ENCODE measurements at regions of chr1 and their contacts with region 1.

Region 1: GRCh38 chr1:19582302-19582701 is 61.8 kb upstream of the NBL1 start:
- DNase-seq: peak; percentile 91
- ATAC-seq: peak; percentile 99
- H3K4me3 Mint-ChIP-seq: no peak overlapping the region
- H3K27ac Mint-ChIP-seq: no peak overlapping the region
- H3K4me1 Mint-ChIP-seq: no peaks in the 10 kb centered on the region
- H3K27me3 Mint-ChIP-seq: no peaks in the 10 kb centered on the region; the same call in 1 of the 2 replicates
- CTCF ChIP-seq: peak; percentile 78

Region 2: GRCh38 chr1:19338323-19338762 is 244.0 kb before region 1 on chr1:
- CTCF ChIA-PET with region 1: interaction called, 18 read pairs
- POLR2A ChIA-PET with region 1: interaction called, 3 read pairs
- DNase-seq: peak; percentile 90
- ATAC-seq: peak; percentile 75
- H3K4me3 Mint-ChIP-seq: peak overlapping the region; percentile 56
- H3K27ac Mint-ChIP-seq: peak overlapping the region; percentile 98
- H3K4me1 Mint-ChIP-seq: peaks cover 34% of the 10 kb centered on the region
- H3K27me3 Mint-ChIP-seq: no peaks in the 10 kb centered on the region
- CTCF ChIP-seq: peak; percentile 33; the same call in 1 of the 2 replicates

Region 3: DNA sequence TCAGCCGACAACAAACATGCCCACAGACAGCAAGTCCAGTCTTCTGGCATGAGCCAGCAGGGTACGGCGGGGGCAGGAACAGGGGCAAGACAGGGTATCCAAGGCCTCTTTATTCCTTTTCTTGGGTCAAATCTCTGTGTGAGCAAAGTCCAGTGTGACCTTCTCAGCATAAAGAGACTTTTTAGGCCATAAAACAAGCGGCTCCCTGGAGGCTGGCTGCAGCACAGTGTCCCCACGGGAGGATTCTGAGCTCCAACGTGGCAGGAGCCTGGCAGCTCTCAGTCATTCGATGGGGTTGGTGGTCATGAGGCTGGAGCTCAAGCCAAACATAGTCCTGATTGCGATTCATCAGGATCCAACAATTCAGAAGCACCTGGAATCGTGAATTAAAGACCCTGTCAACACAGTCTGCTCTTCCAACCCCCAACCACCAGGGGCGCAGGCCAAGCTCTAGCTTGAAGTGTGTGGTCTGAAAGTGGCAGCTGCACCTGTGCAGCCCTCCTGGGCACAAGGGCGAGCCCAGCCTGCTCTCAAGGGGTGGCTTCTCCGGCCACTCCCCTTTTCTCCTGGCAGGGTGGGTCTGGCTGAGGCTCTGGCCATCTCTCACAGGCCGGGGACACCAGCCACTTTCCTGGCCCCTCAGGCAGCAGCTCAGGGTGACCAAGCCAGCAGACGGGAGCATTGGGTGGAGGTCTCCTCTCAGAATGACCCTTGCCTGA is 208.1 kb before region 1 on chr1:
- CTCF ChIA-PET with region 1: interaction called, 20 read pairs
- POLR2A ChIA-PET with region 1: no interaction called
- DNase-seq: peak; percentile 79
- ATAC-seq: peak; percentile 90
- H3K4me3 Mint-ChIP-seq: no peak overlapping the region
- H3K27ac Mint-ChIP-seq: no peak overlapping the region
- H3K4me1 Mint-ChIP-seq: no peaks in the 10 kb centered on the region
- H3K27me3 Mint-ChIP-seq: no peaks in the 10 kb centered on the region
- CTCF ChIP-seq: peak; percentile 81

Region 4: DNA sequence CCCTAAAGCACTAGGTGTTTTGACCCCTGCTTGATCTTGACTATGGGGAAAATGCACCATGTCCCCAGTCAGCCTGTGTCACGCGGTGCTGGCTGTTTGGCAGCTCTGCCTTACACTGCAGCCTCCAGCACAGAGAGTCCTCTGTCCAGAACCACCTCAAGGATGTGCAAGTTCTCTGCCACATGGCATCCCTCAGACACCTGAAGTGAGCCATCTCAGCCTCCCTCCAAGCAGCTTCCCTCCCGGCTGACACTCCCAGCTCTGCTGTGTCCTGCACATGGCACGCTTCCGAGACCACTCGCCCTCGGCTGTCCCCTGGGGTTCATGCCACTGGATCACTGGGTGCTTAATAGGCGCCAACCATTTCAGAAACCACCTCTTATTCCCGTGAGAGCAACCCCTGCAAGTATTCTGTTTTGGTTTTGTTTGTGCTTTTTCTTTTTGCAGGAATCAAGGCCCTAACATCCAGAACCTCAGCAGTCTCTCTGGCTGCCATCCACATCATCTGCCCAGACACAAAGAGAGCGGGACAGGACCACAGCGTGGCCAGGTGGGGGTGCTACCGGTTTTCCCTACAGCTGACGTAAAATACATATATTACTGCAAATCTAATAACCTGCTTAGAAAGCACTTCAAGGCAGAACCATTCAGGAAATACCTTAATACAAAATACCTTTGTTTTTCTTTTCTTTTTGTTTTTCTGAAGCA is 142.7 kb before region 1 on chr1:
- CTCF ChIA-PET with region 1: interaction called, 60 read pairs
- POLR2A ChIA-PET with region 1: no interaction called
- DNase-seq: peak; percentile 54
- ATAC-seq: peak; percentile 74
- H3K4me3 Mint-ChIP-seq: no peak overlapping the region
- H3K27ac Mint-ChIP-seq: peak overlapping the region; percentile 70
- H3K4me1 Mint-ChIP-seq: peaks cover 39% of the 10 kb centered on the region
- H3K27me3 Mint-ChIP-seq: no peaks in the 10 kb centered on the region
- CTCF ChIP-seq: no peak

Region 5: DNA sequence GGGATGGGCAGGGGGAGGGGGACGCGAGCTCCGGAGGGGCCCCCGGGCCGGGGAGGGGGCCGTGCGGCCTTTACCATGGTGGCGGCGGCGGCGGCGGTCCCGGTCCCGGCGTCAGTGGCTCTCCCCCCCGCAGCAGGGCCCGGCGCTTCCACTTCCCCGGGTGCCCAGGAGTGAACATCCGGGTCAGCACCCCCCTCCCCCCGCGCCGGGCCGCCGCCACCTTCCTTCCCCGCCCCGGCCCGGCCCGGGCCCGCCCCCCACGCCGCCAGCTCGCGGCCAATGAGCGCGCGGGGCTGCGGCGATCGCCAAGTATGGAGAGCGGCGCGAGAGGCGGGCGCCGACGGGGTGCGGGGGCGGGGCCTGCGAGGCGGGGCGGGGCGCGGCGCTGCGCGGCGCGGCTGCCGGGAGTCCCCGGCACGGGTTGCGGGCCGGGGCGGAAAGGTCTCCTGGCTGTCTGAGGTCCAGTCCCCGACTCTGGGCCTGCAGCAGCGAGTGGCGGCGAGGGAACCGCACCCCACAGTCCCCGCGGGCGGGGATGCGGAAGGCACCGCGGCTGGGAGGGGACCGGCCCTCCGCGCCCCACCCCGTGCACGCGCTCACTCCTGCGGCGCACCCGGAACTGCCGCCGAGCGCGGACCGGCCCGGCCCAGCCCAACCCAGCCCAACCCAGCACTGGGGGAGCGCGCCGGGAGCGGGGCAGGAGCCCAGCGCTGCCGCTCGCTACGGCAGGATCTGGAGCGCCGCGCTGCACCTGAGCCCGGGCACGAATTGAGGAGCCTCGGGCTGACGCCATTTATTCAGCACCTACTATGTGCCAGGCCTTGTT is 96.7 kb before region 1 on chr1 and contains the start of gene CAPZB:
- CTCF ChIA-PET with region 1: interaction called, 50 read pairs
- POLR2A ChIA-PET with region 1: interaction called, 3 read pairs
- DNase-seq: peak; percentile 88
- ATAC-seq: peak; percentile 81
- H3K4me3 Mint-ChIP-seq: peak within 1 kb of the TSS; percentile 94
- H3K27ac Mint-ChIP-seq: peak within 1 kb of the TSS; percentile 99
- H3K4me1 Mint-ChIP-seq: peaks cover 55% of the 10 kb centered on the region
- H3K27me3 Mint-ChIP-seq: no peaks in the 10 kb centered on the region; the same call in 1 of the 2 replicates
- CTCF ChIP-seq: no peak
- total RNA-seq, gene CAPZB: 348 to 380 TPM (median 363 TPM) in 3 replicates

Region 6: GRCh38 chr1:19628879-19629278 is 46.6 kb after region 1 on chr1:
- CTCF ChIA-PET with region 1: interaction called, 13 read pairs
- POLR2A ChIA-PET with region 1: no interaction called
- DNase-seq: no peak
- ATAC-seq: no peak; the same call in 1 of the 2 replicates
- H3K4me3 Mint-ChIP-seq: no peak overlapping the region
- H3K27ac Mint-ChIP-seq: 0 out of 2 replicates have a peak overlapping the region, but pooled peaks have one; percentile 81
- H3K4me1 Mint-ChIP-seq: peaks cover 18% of the 10 kb centered on the region
- H3K27me3 Mint-ChIP-seq: no peaks in the 10 kb centered on the region
- CTCF ChIP-seq: no peak

Measured in WTC11 (cell line).